ENCODE measurements at regions of chr4 and their contacts with region 1.

Region 1: GRCh38 chr4:37802068-37802666 is 24.3 kb upstream of the PGM2 start:
- DNase-seq: peak; percentile 33
- H3K4me3 ChIP-seq: no peak overlapping the region
- H3K27ac ChIP-seq: no peak overlapping the region
- H3K4me1 ChIP-seq: no peaks in the 10 kb centered on the region
- H3K27me3 ChIP-seq: no peaks in the 10 kb centered on the region
- CTCF ChIP-seq: peak in 3 of 4 experiments; percentile 27 to 67 (median 63)
- POLR2A ChIP-seq: no peak

Region 2: DNA sequence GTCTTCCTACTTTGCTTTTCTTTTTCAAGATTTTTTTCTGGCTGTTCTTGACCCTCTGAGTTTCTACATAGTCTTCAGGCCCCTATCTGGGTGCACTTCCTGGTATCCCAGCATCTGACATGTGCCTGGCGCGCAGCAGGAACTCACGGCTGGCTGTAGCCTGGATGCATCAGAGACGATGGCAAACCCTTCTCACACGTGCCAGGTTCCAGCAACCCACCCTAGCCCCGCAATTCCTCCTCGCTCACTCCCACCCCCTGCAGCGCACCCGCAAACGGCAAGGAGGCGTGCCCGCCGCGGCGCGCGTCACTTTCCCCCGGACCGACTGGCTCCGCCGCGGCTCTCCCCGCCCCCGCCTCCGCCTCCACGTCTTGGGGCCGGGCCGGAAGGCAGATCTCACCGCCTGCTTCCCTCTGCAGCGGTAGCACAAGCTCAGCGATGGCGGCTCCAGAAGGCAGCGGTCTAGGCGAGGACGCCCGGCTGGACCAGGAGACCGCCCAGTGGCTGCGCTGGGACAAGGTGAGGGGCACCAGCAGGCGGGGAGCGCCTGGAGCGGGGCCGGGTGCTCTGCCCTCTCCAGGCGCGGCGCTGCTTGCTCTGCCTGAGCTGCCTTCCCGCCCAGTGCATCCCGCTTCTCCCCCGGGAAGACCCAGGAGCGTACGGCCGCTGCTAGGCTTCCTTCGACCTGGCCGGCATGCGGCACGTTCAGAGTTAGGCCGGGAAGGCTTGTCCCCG is 24.3 kb after region 1 on chr4 and contains the start of gene PGM2:
- intact Hi-C with region 1: loop called (anchors 2 kb)
- DNase-seq: peak; percentile 86
- H3K4me3 ChIP-seq: peak within 1 kb of the TSS; percentile 68 to 87
- H3K27ac ChIP-seq: peak within 1 kb of the TSS; percentile 79 to 83
- H3K4me1 ChIP-seq: no peaks in the 10 kb centered on the region
- H3K27me3 ChIP-seq: no peaks in the 10 kb centered on the region
- CTCF ChIP-seq: peak in 2 of 4 experiments; percentile 23 to 27
- POLR2A ChIP-seq: peak; percentile 94
- total RNA-seq, gene PGM2: 23.2 to 25.3 TPM

Region 3: DNA sequence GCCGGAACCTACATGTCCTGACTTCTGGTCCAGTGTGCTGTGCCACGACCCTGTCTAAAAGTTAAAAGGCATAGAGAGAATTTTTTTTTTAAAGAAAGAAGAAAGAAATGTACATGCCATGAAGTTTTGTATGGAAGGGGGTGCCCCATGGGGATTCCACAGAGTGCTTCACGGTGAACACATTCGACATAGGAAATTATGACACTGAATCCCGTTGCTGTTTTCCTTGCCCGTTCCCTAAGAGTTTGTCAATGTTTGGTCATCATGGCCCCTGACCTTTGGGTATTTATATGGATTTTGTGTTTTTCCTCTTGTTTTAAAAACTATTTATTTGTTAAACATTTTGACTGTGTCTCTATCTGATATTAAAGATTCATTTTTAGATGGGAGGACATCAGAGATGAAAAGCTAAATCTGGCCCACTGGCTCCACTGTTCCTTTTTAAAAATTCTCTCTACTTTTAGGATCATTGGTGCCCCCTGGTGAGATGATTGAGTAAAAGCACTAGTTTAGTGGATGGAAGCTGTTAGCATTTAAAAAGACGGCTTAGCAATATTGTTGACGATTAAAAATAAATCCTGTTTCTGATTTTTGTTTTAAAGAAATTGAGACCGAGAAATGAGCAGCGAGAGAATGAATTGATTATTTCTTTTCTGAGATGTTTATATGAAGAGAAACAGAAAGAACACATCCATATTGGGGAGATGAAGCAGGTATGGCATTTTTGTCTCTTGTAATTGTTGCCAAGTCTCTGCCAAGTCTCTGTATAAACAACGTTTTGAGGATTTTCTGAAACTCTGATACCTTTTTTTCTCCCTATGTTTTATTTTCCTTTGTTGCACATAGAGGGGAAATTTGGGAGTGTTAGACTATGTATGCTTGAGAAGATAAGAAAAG is 233.1 kb after region 1 on chr4:
- intact Hi-C with region 1: loop called (anchors 2 kb)
- DNase-seq: peak; percentile 63
- H3K4me3 ChIP-seq: no peak overlapping the region
- H3K27ac ChIP-seq: no peak overlapping the region
- H3K4me1 ChIP-seq: no peaks in the 10 kb centered on the region
- H3K27me3 ChIP-seq: no peaks in the 10 kb centered on the region
- CTCF ChIP-seq: peak; percentile 32 to 84 (median 72)
- POLR2A ChIP-seq: no peak